Caco-2 (cell line): ENCODE measurements at regions of chr16 and their contacts with region 1.

Region 1: GRCh38 chr16:10918294-10919002 is 23.8 kb downstream of the DEXI start:
- DNase-seq: peak; percentile 91
- H3K4me3 ChIP-seq: no peak overlapping the region
- H3K4me3 Mint-ChIP-seq: no peak overlapping the region
- H3K27ac Mint-ChIP-seq: no peak overlapping the region
- H3K4me1 ChIP-seq: peaks cover 28% of the 10 kb centered on the region
- H3K4me1 Mint-ChIP-seq: peaks cover 7% of the 10 kb centered on the region
- H3K27me3 ChIP-seq: no peaks in the 10 kb centered on the region
- H3K27me3 Mint-ChIP-seq: no peaks in the 10 kb centered on the region
- CTCF ChIP-seq: peak; percentile 84 to 92

Region 2: GRCh38 chr16:10743610-10744393 is 174.6 kb before region 1 on chr16 and contains the start of gene NUBP1:
- CTCF ChIA-PET with region 1: interaction called, 14 read pairs
- POLR2A ChIA-PET with region 1: no interaction called
- intact Hi-C with region 1: loop called (anchors 1 kb)
- DNase-seq: peak; percentile 97 to 99
- H3K4me3 ChIP-seq: peak within 1 kb of the TSS; percentile 85
- H3K4me3 Mint-ChIP-seq: peak within 1 kb of the TSS; percentile 89
- H3K27ac Mint-ChIP-seq: peak within 1 kb of the TSS; percentile 97
- H3K4me1 ChIP-seq: no peaks in the 10 kb centered on the region
- H3K4me1 Mint-ChIP-seq: peaks cover 12% of the 10 kb centered on the region
- H3K27me3 ChIP-seq: no peaks in the 10 kb centered on the region
- H3K27me3 Mint-ChIP-seq: no peaks in the 10 kb centered on the region
- CTCF ChIP-seq: no peak
- total RNA-seq, gene NUBP1: 25.3 and 28.3 TPM in 2 replicates

Region 3: GRCh38 chr16:10776280-10776679 is 142.2 kb before region 1 on chr16:
- CTCF ChIA-PET with region 1: no interaction called
- POLR2A ChIA-PET with region 1: no interaction called
- intact Hi-C with region 1: loop called (anchors 10 kb)
- DNase-seq: no peak
- H3K4me3 ChIP-seq: no peak overlapping the region
- H3K4me3 Mint-ChIP-seq: no peak overlapping the region
- H3K27ac Mint-ChIP-seq: no peak overlapping the region
- H3K4me1 ChIP-seq: no peaks in the 10 kb centered on the region
- H3K4me1 Mint-ChIP-seq: no peaks in the 10 kb centered on the region
- H3K27me3 ChIP-seq: no peaks in the 10 kb centered on the region
- H3K27me3 Mint-ChIP-seq: no peaks in the 10 kb centered on the region
- CTCF ChIP-seq: no peak

Region 4: DNA sequence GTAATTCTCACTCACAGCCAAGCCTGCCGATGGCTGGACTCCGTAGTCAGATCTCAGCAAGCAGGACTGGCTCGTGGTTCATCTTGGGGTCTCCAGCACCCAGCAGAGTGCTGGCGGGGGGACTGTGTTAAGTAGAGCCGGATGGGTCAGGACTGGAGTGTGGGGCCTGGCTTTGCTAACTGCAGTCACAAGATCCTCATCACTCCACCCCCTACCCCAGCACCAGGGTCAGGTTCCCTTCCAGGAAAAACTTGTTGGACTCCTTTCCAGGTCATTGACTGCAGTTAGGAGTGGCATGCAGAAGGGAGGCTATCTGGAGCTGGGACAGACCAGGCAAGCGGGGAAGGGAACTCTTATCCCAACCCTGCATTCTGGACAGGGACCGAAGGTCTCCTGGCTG is 35.4 kb before region 1 on chr16:
- CTCF ChIA-PET with region 1: interaction called, 9 read pairs
- POLR2A ChIA-PET with region 1: no interaction called
- intact Hi-C with region 1: loop called (anchors 2 kb)
- DNase-seq: peak; percentile 68 to 72
- H3K4me3 ChIP-seq: no peak overlapping the region
- H3K4me3 Mint-ChIP-seq: no peak overlapping the region
- H3K27ac Mint-ChIP-seq: no peak overlapping the region
- H3K4me1 ChIP-seq: peaks cover 17% of the 10 kb centered on the region
- H3K4me1 Mint-ChIP-seq: peaks cover 8% of the 10 kb centered on the region
- H3K27me3 ChIP-seq: no peaks in the 10 kb centered on the region
- H3K27me3 Mint-ChIP-seq: peaks cover 4% of the 10 kb centered on the region
- CTCF ChIP-seq: no peak

Region 5: GRCh38 chr16:10988164-10988803 is 69.8 kb after region 1 on chr16:
- CTCF ChIA-PET with region 1: no interaction called
- POLR2A ChIA-PET with region 1: no interaction called
- intact Hi-C with region 1: no loop called
- DNase-seq: no peak
- H3K4me3 ChIP-seq: no peak overlapping the region
- H3K4me3 Mint-ChIP-seq: no peak overlapping the region
- H3K27ac Mint-ChIP-seq: no peak overlapping the region
- H3K4me1 ChIP-seq: peaks cover 11% of the 10 kb centered on the region
- H3K4me1 Mint-ChIP-seq: peaks cover 23% of the 10 kb centered on the region
- H3K27me3 ChIP-seq: no peaks in the 10 kb centered on the region
- H3K27me3 Mint-ChIP-seq: no peaks in the 10 kb centered on the region
- CTCF ChIP-seq: peak; percentile 19 to 37